ENCODE measurements at regions of chr5 and their contacts with region 1.

Region 1: GRCh38 chr5:91119981-91120850 is 262.9 kb downstream of the ARRDC3 start:
- DNase-seq: no peak
- H3K4me3 ChIP-seq: no peak overlapping the region
- H3K27ac ChIP-seq: no peak overlapping the region
- H3K4me1 ChIP-seq: peaks cover 3% of the 10 kb centered on the region
- H3K27me3 ChIP-seq: no peaks in the 10 kb centered on the region
- CTCF ChIP-seq: no peak
- POLR2A ChIP-seq: no peak

Region 2: GRCh38 chr5:90802474-90803317 is 317.5 kb before region 1 on chr5:
- CTCF ChIA-PET with region 1: no interaction called
- POLR2A ChIA-PET with region 1: no interaction called
- dilution Hi-C with region 1: no loop called
- intact Hi-C with region 1: no loop called
- DNase-seq: peak; percentile 55
- H3K4me3 ChIP-seq: no peak overlapping the region
- H3K27ac ChIP-seq: no peak overlapping the region
- H3K4me1 ChIP-seq: no peaks in the 10 kb centered on the region
- H3K27me3 ChIP-seq: peaks cover 0 to 4% of the 10 kb centered on the region in 2 experiments
- CTCF ChIP-seq: peak; percentile 66 to 71
- POLR2A ChIP-seq: no peak

Region 3: DNA sequence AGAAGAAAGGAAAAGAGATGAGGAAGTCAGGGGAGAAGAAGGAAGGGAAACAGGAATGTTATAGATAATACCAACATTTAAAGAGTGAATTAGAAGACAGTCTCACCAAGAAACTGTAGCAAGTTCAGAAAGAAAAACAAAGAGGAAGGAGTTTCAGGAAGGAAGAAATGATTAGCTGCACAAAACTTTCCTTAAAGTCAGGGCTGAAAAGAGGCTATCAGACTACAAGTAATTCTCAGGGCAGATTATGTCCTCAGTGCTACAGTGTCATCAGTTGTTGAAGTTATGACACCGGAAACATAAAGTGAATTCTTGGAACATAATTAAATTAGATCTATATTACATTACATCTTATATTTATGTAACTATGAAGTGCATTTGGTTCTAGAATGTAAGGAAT is 36.0 kb after region 1 on chr5:
- CTCF ChIA-PET with region 1: no interaction called
- POLR2A ChIA-PET with region 1: no interaction called
- dilution Hi-C with region 1: no loop called
- intact Hi-C with region 1: loop called (anchors 5 kb)
- DNase-seq: peak; percentile 49
- H3K4me3 ChIP-seq: no peak overlapping the region
- H3K27ac ChIP-seq: peak overlapping the region; percentile 15
- H3K4me1 ChIP-seq: peaks cover 16% of the 10 kb centered on the region
- H3K27me3 ChIP-seq: no peaks in the 10 kb centered on the region
- CTCF ChIP-seq: no peak
- POLR2A ChIP-seq: no peak

Measured in endothelial cell of umbilical vein (primary cell).